ENCODE measurements at regions of chr1 and their contacts with region 1.

Region 1: DNA sequence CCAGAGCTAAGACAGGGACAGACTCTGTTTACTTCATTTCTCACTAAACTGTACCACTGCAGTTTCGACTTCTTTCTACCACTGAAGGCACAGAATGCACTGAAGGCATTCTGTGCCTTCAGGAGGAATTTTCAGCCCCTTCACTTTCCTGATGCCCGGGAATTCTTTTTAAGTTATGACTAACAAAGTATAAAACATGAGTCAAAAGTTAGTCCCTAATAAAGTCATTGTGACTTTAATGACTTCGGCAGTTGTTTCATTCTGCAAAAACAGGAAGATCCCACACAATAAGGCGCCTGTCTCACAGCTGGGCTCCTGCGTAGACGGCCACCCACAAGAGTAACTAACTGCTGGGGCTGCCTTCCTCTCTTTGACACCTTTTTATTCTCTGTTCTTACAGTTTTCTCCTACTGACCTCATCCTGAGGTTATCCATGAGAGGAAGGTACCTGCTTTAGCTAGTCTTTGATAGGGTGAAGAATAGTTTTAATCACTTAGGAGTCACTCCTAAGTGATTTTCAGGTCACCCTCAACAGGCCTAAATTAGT is 183.9 kb upstream of the SGIP1 start:
- DNase-seq: peak; percentile 77
- H3K4me3 Mint-ChIP-seq: peak overlapping the region; percentile 65
- H3K27ac Mint-ChIP-seq: peak overlapping the region; percentile 83
- H3K4me1 Mint-ChIP-seq: peaks cover 93% of the 10 kb centered on the region
- H3K27me3 Mint-ChIP-seq: no peaks in the 10 kb centered on the region

Region 2: GRCh38 chr1:66253330-66253921 is 96.6 kb before region 1 on chr1:
- CTCF ChIA-PET with region 1: interaction called, 17 read pairs
- POLR2A ChIA-PET with region 1: interaction called, 8 read pairs
- intact Hi-C with region 1: loop called (anchors 1 kb)
- DNase-seq: no peak
- H3K4me3 Mint-ChIP-seq: no peak overlapping the region
- H3K27ac Mint-ChIP-seq: no peak overlapping the region
- H3K4me1 Mint-ChIP-seq: peaks cover 51% of the 10 kb centered on the region
- H3K27me3 Mint-ChIP-seq: no peaks in the 10 kb centered on the region

Region 3: DNA sequence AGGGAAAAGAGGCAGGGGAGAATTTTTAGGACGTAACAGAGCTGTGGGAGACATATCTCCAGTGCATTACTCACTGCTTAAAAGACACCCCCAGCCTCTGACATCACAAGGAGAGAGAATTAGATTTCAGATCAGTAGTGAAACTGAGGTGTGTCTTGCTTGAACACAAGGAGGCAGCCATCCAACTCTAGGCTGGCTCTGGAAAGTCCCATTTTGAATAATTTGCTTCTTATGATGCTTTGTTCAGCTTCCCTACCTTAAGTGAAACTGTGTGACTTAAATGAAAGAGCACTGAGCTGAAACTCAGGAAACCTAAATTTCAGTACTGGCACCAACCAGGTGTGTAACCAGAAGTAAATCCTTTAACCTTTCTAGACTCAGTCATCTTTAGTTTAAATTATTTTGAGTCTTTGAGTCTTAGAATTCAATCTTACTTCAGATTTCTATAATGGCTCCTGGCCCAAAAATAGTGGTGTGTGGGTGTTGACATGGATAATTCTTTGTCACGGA is 67.7 kb before region 1 on chr1:
- CTCF ChIA-PET with region 1: interaction called, 10 read pairs
- POLR2A ChIA-PET with region 1: interaction called, 8 read pairs
- intact Hi-C with region 1: loop called (anchors 1 kb)
- DNase-seq: peak; percentile 80
- H3K4me3 Mint-ChIP-seq: no peak overlapping the region
- H3K27ac Mint-ChIP-seq: peak overlapping the region; percentile 76
- H3K4me1 Mint-ChIP-seq: peaks cover 87% of the 10 kb centered on the region
- H3K27me3 Mint-ChIP-seq: no peaks in the 10 kb centered on the region

Region 4: DNA sequence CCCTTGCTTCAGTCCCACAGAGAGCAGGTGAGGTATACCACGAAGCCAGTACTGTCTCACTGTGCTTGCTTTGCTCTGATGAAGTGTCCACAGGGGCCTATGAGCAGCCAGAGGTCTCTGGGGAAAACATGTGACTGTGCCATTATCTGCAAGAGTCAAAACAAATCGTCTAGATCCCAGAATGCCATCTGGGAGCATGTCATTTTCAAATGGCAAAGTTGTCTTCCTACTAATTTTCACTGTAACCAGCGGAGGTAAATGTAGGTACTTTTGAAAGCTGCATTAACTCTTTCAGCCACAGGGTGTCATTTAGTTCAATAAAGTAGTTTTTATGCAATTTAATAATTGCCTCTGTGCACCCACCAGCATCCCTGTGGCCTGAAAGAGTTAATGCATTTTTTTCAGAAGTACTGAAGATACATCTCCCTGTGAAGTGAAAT is 10.2 kb after region 1 on chr1:
- CTCF ChIA-PET with region 1: interaction called, 10 read pairs
- POLR2A ChIA-PET with region 1: interaction called, 26 read pairs
- intact Hi-C with region 1: loop called (anchors 1 kb)
- DNase-seq: no peak
- H3K4me3 Mint-ChIP-seq: no peak overlapping the region
- H3K27ac Mint-ChIP-seq: no peak overlapping the region
- H3K4me1 Mint-ChIP-seq: peaks cover 83% of the 10 kb centered on the region
- H3K27me3 Mint-ChIP-seq: no peaks in the 10 kb centered on the region

Region 5: DNA sequence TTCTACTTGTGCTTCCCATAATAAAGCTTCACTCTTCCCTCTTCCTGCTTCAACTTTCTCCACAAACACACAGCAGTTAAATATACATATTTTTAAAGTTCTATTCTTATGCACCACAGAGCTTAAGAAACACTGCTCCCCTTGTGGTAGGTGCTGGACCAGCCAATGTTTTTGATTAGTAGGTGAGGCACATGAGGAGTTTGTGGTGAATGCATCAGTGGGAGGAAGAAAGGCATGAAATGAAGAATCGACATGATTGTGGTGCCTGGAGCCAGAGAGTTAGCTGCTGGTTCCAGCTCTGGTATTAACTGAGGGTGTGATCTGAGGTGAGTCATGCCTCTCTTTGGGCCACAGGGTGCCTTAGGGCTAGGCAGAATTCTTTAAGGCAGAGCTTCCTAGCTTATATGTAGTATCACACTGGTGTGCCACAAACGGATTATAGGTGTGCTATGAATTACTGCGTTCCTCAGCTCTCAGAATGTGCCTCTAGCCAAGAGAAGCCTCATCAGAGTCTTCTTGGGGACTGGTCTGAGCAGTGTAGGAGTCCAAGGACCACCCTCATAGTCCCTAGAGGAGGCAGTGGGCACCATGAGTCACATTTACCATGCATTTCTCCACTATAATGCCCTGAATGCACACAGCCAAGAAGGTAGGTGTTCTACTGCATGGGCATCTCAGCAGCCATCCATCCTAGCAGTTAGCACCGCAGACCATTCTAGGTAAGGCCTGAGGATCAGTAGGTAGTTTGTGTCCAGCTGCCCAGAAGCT is 86.5 kb after region 1 on chr1:
- CTCF ChIA-PET with region 1: interaction called, 39 read pairs
- POLR2A ChIA-PET with region 1: interaction called, 11 read pairs
- intact Hi-C with region 1: loop called (anchors 1 kb)
- DNase-seq: peak; percentile 81
- H3K4me3 Mint-ChIP-seq: no peak overlapping the region
- H3K27ac Mint-ChIP-seq: peak overlapping the region; percentile 39
- H3K4me1 Mint-ChIP-seq: peaks cover 39% of the 10 kb centered on the region
- H3K27me3 Mint-ChIP-seq: no peaks in the 10 kb centered on the region

Region 6: DNA sequence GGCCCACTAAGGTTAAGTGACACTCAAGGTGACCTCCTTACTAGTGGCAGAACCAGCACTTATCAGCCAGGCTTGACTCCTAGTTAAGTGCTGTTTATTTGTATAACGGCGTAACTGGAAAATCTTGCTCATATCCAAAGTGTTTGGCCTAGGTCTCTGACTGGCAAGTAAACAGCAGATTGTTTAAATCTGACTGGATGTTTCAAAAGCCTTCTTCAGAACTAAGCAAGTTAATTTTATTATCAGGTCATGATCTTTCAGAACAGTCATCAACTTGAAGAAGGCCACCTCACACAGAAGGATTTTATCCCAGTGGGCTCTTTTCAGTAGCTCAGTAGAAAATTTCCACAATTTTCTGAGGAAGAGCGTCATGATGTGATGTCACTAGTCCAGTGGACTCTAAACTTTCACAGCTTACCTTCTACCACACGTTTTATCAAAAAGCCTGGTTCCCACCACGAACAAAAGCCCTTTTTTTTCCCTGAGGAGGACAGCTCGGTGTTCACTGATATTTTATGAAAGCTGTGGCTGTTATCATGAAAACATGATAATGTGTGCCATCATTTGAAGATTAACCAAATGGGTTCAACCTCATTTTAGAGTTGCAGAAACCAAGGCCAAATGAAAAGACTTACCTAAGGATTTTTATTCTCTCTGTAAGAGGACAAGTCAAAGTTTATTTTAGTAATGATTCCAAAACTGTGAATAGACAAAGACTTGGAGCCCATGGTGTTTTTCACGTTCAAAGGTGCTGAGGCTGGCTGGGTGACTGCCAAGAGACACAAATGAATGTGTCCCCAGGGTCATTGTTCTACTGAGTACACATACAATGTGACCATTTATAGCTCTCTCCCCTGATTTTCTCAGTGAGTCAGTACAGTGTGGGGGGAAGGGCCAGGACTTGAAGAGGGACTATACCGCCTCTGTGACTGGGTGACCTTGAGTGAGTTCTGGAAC is 193.0 kb after region 1 on chr1:
- CTCF ChIA-PET with region 1: no interaction called
- POLR2A ChIA-PET with region 1: no interaction called
- intact Hi-C with region 1: no loop called
- DNase-seq: no peak
- H3K4me3 Mint-ChIP-seq: no peak overlapping the region
- H3K27ac Mint-ChIP-seq: no peak overlapping the region
- H3K4me1 Mint-ChIP-seq: no peaks in the 10 kb centered on the region
- H3K27me3 Mint-ChIP-seq: peaks cover 5% of the 10 kb centered on the region